ENCODE measurements at regions of chr6 and their contacts with region 1.

Region 1: GRCh38 chr6:34223956-34224940 is 12.4 kb upstream of the HMGA1 start:
- DNase-seq: peak; percentile 98
- ATAC-seq: peak; percentile 97
- H3K4me3 Mint-ChIP-seq: peak overlapping the region; percentile 52
- H3K27ac Mint-ChIP-seq: peak overlapping the region; percentile 88
- H3K4me1 Mint-ChIP-seq: peaks cover 44% of the 10 kb centered on the region
- H3K27me3 Mint-ChIP-seq: no peaks in the 10 kb centered on the region

Region 2: DNA sequence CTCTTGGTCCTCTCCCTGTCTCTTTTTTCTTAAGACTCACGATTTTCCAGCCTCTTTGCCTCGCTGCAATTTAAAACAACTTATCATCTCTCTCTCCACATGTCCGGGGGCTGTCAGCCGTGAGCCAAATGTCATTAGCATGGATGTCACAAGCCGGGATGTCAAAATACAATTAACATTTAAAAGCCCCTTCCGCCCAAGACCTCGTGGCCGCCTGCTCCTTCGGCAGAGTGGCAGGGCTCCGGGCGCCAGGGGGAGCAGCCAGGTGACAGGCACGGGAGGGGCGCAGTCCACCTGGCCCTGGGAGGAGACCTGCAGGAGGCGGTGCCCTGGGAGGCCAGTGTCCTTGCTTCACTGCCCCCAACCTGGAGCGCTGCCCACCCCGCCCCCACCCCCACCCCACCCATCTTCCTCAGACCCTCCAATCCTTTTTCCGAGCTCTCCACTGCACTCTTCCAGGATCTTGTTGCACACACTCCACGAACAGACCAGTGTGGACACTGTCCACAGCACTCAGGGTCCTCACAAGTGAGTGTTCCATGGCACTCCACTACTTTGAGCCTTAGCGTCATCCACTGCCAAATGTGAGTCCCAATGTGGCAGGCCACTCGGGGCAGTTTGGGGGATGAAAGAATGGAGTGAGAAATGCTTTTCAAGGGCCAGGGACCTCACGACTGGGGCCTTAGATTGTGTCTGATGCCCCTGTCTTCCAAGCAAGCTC is 72.8 kb before region 1 on chr6:
- CTCF ChIA-PET with region 1: no interaction called
- POLR2A ChIA-PET with region 1: no interaction called
- intact Hi-C with region 1: no loop called
- DNase-seq: no peak
- ATAC-seq: no peak
- H3K4me3 Mint-ChIP-seq: no peak overlapping the region
- H3K27ac Mint-ChIP-seq: no peak overlapping the region
- H3K4me1 Mint-ChIP-seq: peaks cover 4% of the 10 kb centered on the region
- H3K27me3 Mint-ChIP-seq: peaks cover 44% of the 10 kb centered on the region

Region 3: GRCh38 chr6:34182751-34183531 is 41.3 kb before region 1 on chr6:
- CTCF ChIA-PET with region 1: interaction called, 5 read pairs
- POLR2A ChIA-PET with region 1: interaction called, 3 read pairs
- intact Hi-C with region 1: loop called in 1 of 2 experiments (anchors 1 kb)
- DNase-seq: peak; percentile 78
- ATAC-seq: peak; percentile 95
- H3K4me3 Mint-ChIP-seq: peak overlapping the region; percentile 65
- H3K27ac Mint-ChIP-seq: peak overlapping the region; percentile 95
- H3K4me1 Mint-ChIP-seq: peaks cover 20% of the 10 kb centered on the region
- H3K27me3 Mint-ChIP-seq: no peaks in the 10 kb centered on the region

Region 4: GRCh38 chr6:34260576-34261267 is 36.5 kb after region 1 on chr6:
- CTCF ChIA-PET with region 1: no interaction called
- POLR2A ChIA-PET with region 1: no interaction called
- intact Hi-C with region 1: no loop called
- DNase-seq: no peak
- ATAC-seq: no peak
- H3K4me3 Mint-ChIP-seq: no peak overlapping the region
- H3K27ac Mint-ChIP-seq: no peak overlapping the region
- H3K4me1 Mint-ChIP-seq: no peaks in the 10 kb centered on the region
- H3K27me3 Mint-ChIP-seq: no peaks in the 10 kb centered on the region

Measured in activated CD4-positive, alpha-beta T cell treated with anti-CD3 and anti-CD28 coated beads for 36 hours (primary cell).